GM10248 (cell line): ENCODE measurements at regions of chr11 and their contacts with region 1.

Region 1: GRCh38 chr11:44936525-44936924 is 14.2 kb downstream of the TP53I11 start:
- DNase-seq: peak; percentile 83
- CTCF ChIP-seq: peak; percentile 96

Region 2: GRCh38 chr11:44917741-44918140 is 18.8 kb before region 1 on chr11:
- CTCF ChIA-PET with region 1: interaction called, 15 read pairs
- POLR2A ChIA-PET with region 1: no interaction called
- DNase-seq: no peak
- CTCF ChIP-seq: no peak

Region 3: DNA sequence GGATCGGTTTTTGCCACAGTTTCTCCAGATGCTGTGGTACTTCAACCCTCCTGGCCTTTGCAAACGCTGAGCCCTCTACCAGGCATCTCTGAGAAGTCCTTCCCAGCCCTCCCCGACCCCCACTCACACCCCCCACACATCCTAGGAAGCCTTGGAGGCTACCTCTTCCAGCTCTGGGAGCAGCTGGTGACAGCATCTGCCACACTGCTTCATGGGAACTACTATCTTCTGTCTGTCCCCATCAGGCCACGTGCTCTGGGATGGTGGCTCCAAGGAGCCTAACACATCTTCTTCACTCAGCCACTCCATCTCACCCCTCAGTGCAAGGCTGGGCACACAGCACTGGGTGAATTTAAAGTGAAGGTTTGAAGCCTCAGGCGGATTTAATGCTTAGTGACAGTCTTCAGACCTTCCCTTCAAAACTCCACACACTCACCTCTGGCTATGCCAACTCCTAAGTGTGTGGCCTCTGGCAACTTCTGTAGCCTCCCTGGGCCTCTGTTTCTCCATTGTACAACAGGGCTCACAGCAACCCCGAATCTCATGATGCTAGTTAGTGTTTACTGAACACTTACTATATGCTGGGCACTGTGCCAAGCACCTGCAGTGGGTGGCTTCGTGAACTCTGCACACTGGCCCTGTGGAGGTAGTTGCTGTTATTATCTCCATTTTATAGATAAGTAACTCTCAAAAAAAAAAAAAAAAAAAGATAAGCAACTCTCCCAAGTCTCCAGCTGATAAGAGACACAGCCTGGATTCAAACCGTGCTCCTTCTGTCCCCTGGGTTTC is 21.4 kb after region 1 on chr11:
- CTCF ChIA-PET with region 1: interaction called, 14 read pairs
- POLR2A ChIA-PET with region 1: no interaction called
- DNase-seq: no peak
- CTCF ChIP-seq: no peak

Region 4: GRCh38 chr11:44979543-44980399 is 43.2 kb after region 1 on chr11:
- CTCF ChIA-PET with region 1: interaction called, 12 read pairs
- POLR2A ChIA-PET with region 1: no interaction called
- DNase-seq: no peak
- CTCF ChIP-seq: no peak

Region 5: DNA sequence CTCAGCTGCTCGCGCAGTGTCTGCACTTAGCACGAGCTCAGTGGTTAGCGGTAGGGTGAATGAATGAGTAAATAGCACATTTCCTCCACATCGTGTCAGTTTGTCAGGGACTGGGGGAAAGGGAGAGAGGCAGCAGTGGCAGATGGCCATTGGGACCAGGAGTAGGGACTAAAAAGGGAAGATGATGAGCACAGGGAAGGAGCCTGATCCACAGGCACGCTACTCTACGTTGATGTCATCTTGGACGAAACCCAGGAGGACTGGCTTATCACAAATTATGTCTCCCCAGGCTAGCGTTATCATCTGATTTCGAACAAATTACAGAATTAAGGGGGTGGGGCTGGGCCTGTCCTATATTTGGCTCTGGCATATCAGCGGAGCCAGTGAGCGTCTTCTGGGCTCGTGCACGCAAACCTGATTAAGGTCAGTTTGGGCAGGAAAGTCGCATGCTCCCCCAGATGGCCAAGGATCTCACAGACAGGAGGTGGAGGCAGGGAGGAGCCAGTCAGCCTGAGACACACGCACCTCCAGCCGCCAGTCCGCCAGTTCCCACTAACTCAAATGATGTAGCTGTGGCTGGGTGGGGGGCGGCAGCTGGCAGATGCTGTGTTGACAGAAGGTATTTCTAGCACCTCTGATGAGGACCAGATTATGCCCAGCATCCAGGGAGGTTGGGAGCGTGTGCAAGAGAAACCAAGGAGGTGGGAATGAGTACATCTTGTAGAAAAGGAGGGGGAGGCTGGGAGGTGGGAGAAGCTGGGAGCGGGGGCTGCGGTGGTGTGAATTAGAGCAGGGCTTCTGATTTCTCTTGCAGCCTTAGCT is 112.6 kb after region 1 on chr11:
- CTCF ChIA-PET with region 1: no interaction called
- POLR2A ChIA-PET with region 1: no interaction called
- DNase-seq: no peak
- CTCF ChIP-seq: no peak

Region 6: GRCh38 chr11:45073685-45074141 is 137.2 kb after region 1 on chr11:
- CTCF ChIA-PET with region 1: interaction called, 11 read pairs
- POLR2A ChIA-PET with region 1: no interaction called
- DNase-seq: no peak
- CTCF ChIP-seq: no peak

Region 7: GRCh38 chr11:45102810-45103621 is 166.5 kb after region 1 on chr11:
- CTCF ChIA-PET with region 1: interaction called, 899 read pairs
- POLR2A ChIA-PET with region 1: no interaction called
- DNase-seq: peak; percentile 77
- CTCF ChIP-seq: peak; percentile 91